ENCODE measurements at regions of chr22 and their contacts with region 1.

Region 1: GRCh38 chr22:31661851-31662656 is at the start of gene PISD:
- DNase-seq: peak; percentile 99

Region 2: DNA sequence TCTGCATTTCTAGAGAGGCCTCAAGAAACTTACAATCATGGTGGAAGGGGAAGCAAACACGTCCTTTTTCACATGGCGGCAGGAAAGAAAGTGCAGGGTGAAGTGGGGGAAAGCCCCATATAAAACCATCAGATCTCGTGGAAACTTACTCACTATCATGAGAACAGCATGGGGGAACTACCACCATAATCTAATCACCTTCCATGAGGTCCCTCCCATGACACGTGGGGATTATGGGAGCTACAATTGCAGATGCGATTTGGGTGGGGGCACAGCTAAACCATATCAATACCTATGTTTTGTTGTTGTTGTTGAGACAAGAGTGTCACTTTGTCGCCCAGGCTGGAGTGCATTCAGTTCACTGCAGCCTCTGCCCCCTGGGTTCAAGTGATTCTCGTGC is 135.8 kb before region 1 on chr22:
- CTCF ChIA-PET with region 1: no interaction called
- POLR2A ChIA-PET with region 1: no interaction called
- DNase-seq: no peak

Region 3: DNA sequence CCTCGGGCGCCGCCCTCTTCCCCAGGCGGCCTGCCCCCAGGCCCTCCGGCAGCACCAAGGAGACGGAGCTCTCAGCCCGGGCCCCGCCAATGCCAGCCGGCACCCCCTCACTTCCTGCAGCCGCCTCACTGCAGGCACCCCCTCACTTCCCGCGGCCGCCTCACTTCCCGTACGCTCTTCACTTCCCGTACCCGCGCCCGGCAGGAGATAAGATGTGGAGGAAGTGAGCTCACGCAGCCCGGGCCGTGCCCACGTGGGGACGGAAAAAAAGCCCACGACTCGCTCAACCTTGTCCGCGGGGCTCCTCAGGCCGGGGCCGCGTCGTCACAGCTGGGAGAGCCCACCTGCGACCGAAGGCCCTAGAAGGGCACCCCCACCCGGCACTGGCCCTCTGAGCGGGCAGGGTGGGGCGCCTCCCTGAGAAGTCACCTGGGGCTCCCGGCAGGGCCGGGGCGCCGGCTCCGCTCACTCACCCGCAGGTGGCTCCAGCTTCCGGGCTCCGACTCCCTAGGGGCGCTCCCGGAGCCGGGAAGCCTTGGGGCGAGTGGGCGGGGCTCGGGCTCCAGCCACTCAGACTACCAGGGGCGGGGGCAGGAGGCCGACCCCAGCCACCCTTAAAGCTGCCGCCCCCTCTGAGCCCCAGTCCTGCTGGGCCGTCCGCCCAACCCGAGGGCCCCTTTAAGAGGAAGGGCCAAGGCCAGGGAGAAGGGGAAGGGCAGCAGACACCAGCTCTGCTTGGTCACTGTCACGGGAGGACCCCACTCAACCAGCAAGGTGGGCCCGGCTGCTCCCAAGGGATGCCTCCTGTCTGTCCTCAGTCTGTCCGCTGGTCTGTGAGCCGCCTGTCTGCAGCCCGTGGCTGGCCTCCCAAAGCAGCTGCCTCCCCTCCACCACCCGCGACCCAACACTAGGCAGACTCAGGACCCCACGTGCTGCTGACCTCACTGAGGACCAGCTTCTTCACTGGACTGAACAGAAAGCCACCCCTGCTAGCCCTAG is 31.4 kb before region 1 on chr22:
- CTCF ChIA-PET with region 1: no interaction called
- POLR2A ChIA-PET with region 1: interaction called, 14 read pairs
- DNase-seq: peak; percentile 76

Region 4: GRCh38 chr22:31646186-31647089 is 15.6 kb before region 1 on chr22:
- CTCF ChIA-PET with region 1: no interaction called
- POLR2A ChIA-PET with region 1: interaction called, 16 read pairs
- DNase-seq: peak; percentile 17

Region 5: DNA sequence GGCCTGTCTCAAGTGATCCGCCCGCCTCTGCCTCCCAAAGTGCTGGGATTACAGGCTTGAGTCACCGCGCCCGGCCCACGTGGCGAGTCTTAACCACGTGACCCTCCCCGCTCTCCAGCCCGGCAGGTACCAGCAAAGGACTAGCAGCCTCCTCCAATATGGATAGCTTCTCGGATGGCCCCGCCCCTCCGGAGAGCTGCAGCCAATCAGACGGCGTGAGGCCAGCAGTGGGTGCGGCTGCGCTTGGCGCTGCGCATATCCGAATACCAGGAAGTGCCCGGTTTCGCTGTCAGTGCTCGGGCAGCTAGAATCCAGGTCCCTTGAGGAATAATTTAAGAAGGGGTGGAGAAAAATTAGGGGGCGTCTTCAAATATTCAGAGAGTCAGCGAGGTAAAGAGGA is 14.6 kb after region 1 on chr22:
- CTCF ChIA-PET with region 1: interaction called, 12 read pairs
- POLR2A ChIA-PET with region 1: interaction called, 31 read pairs
- DNase-seq: no peak

Region 6: DNA sequence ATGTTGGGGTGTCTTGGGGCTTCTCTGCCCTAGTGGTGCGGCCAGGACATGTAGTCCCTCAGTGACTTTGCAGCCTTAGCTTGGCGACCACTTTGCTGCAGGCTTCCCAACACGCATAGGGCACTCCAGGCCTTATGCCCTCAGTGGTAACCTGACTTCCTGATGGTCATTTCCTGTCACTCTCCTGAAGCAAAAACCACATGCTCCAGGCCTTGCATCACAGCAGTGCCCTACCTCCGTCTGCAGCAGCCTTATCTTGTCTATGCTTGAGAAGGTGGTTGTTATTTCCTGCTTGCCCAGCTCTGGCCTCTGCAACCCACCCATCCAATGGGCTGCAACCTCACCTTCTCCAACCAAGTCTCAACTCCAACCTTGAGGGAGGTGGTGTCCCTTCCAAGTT is 33.4 kb after region 1 on chr22:
- CTCF ChIA-PET with region 1: no interaction called
- POLR2A ChIA-PET with region 1: no interaction called
- DNase-seq: no peak

Region 7: GRCh38 chr22:31753634-31754501 is 91.8 kb after region 1 on chr22 and contains the start of gene DEPDC5:
- CTCF ChIA-PET with region 1: no interaction called
- POLR2A ChIA-PET with region 1: interaction called, 35 read pairs
- DNase-seq: peak; percentile 99

Region 8: DNA sequence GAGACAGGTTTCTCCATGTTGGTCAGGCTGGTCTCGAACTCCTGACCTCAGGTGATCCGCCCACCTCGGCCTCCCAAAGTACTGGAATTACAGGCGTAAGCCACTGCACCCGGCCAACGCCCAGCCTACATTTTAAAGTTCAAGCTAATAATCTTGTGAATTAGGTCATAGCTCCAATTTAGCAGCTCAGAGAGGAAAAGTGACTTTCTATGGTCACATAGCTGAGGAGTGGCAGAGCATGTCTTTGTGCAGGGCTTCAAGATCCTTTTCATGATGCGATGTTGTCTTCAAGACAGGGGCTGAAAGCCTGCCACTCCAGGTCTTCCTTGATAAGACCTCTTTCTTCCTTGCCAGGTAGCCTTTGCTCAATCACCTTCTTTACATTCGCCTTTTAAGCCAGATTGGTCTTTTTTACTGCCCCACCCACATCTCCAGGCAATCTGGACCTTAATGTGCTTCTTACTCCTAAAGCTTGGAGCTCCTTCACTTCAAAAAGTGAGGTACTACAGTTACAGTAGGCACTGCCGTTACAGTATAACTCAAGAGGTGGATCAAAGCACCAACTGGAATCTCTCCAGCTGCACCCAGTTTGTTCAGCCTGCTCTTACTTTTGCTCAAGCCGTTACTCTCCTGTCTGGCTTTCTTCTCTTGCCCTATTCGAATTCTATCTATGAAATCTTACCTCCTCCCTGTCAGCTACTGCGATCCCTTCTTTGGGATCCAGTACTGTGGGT is 300.5 kb after region 1 on chr22:
- CTCF ChIA-PET with region 1: interaction called, 4 read pairs
- POLR2A ChIA-PET with region 1: interaction called, 11 read pairs
- DNase-seq: no peak

Region 9: GRCh38 chr22:31970490-31971444 is 308.7 kb after region 1 on chr22:
- CTCF ChIA-PET with region 1: interaction called, 11 read pairs
- POLR2A ChIA-PET with region 1: interaction called, 17 read pairs
- DNase-seq: peak; percentile 99

Measured in HEK293T (cell line).